ENCODE measurements at regions of chr2 and their contacts with region 1.

Region 1: DNA sequence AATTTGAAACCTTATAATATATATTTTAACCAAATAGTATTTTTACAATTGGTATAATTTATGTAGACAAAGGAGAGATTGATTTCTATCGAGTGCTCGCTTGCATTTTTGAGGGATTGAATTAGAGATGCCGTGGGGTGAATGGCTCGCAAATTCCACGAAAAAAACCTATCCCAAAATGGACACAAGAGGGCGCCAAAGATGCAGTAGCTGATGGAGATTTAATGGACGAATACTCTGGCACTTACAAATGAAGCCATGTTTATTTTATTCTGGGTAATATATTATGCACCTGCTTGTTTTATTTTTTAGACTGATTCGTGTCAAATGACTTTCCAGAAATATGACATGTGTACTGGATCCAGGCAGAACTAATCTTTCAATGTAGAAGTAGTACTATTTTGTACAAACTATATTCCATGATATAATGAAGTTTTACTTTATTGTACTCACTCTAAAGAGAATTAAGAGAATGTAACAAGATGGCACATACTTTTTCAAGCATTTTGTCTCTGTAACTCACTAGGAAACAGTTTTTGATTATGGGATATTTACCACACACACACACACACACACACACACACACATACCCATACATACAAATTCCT is 505.4 kb downstream of the PLCL1 start:
- DNase-seq: peak; percentile 69
- H3K4me3 Mint-ChIP-seq: no peak overlapping the region
- H3K27ac Mint-ChIP-seq: no peak overlapping the region
- H3K4me1 Mint-ChIP-seq: no peaks in the 10 kb centered on the region
- H3K27me3 Mint-ChIP-seq: peaks cover 35% of the 10 kb centered on the region

Region 2: GRCh38 chr2:198296665-198297308 is 13.0 kb before region 1 on chr2:
- CTCF ChIA-PET with region 1: interaction called, 12 read pairs
- DNase-seq: peak; percentile 65
- H3K4me3 Mint-ChIP-seq: no peak overlapping the region
- H3K27ac Mint-ChIP-seq: no peak overlapping the region
- H3K4me1 Mint-ChIP-seq: no peaks in the 10 kb centered on the region
- H3K27me3 Mint-ChIP-seq: peaks cover 24% of the 10 kb centered on the region

Region 3: DNA sequence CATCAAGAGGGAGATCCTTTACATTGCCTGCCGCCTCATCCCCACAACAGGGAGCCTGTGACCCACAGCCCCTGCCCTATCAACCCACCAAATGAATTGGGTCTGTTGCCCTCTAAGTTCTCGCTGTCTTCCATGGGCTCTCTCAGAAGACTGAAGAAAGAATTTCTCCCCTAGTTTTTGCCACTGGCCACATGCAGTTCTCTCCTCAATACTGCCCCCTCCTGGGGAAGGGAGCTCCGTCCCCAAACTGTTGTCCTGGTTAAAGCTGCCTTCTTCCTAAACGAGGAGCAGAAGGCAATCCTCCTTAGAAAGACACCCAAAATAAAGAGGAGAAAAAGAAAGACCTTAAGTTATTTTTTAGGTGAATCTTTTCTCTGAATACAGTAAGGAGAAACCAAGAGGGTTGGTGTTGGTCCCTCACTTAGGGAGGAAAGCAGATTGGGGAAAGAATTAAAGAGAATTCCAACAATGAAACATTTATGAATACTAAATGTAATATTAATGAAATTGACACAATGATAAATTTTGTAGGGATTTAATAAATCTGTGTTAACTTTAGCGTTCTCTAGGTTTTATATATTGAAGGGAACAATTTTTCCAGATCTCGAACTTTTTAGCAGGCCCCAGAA is 1179.1 kb after region 1 on chr2:
- CTCF ChIA-PET with region 1: interaction called, 11 read pairs
- DNase-seq: peak; percentile 60
- H3K4me3 Mint-ChIP-seq: no peak overlapping the region
- H3K27ac Mint-ChIP-seq: no peak overlapping the region
- H3K4me1 Mint-ChIP-seq: no peaks in the 10 kb centered on the region
- H3K27me3 Mint-ChIP-seq: peaks cover 23% of the 10 kb centered on the region